B cell (primary cell): ENCODE measurements at regions of chr4 and their contacts with region 1.

Region 1: GRCh38 chr4:40924096-40924792 is 174.5 kb downstream of the NSUN7 start:
- DNase-seq: peak; percentile 66
- ATAC-seq: peak; percentile 78
- H3K4me3 ChIP-seq: no peak overlapping the region
- H3K4me3 Mint-ChIP-seq: no peak overlapping the region
- H3K27ac ChIP-seq: no peak overlapping the region
- H3K27ac Mint-ChIP-seq: no peak overlapping the region
- H3K4me1 ChIP-seq: peaks cover 0 to 3% of the 10 kb centered on the region in 2 donors
- H3K4me1 Mint-ChIP-seq: peaks cover 3% of the 10 kb centered on the region
- H3K27me3 ChIP-seq: no peaks in the 10 kb centered on the region
- H3K27me3 Mint-ChIP-seq: peaks cover 7% of the 10 kb centered on the region
- CTCF ChIP-seq: peak; percentile 85

Region 2: GRCh38 chr4:40736910-40737309 is 187.3 kb before region 1 on chr4:
- CTCF ChIA-PET with region 1: interaction called, 53 read pairs
- POLR2A ChIA-PET with region 1: no interaction called
- intact Hi-C with region 1: loop called (anchors 1 kb)
- DNase-seq: peak; percentile 56
- ATAC-seq: no peak
- H3K4me3 ChIP-seq: no peak overlapping the region
- H3K4me3 Mint-ChIP-seq: no peak overlapping the region
- H3K27ac ChIP-seq: no peak overlapping the region
- H3K27ac Mint-ChIP-seq: no peak overlapping the region
- H3K4me1 ChIP-seq: peaks cover 0 to 2% of the 10 kb centered on the region in 2 donors
- H3K4me1 Mint-ChIP-seq: peaks cover 5% of the 10 kb centered on the region
- H3K27me3 ChIP-seq: no peaks in the 10 kb centered on the region
- H3K27me3 Mint-ChIP-seq: peaks cover 3% of the 10 kb centered on the region
- CTCF ChIP-seq: peak; percentile 57

Region 3: GRCh38 chr4:40897557-40898203 is 26.6 kb before region 1 on chr4:
- CTCF ChIA-PET with region 1: interaction called, 15 read pairs
- POLR2A ChIA-PET with region 1: no interaction called
- intact Hi-C with region 1: no loop called
- DNase-seq: peak; percentile 75
- ATAC-seq: peak; percentile 73
- H3K4me3 ChIP-seq: peak overlapping the region in 2 of 5 experiments; percentile 1 to 19
- H3K4me3 Mint-ChIP-seq: peak overlapping the region; percentile 75
- H3K27ac ChIP-seq: no peak overlapping the region
- H3K27ac Mint-ChIP-seq: peak overlapping the region; percentile 70
- H3K4me1 ChIP-seq: peaks cover 4 to 5% of the 10 kb centered on the region in 2 donors
- H3K4me1 Mint-ChIP-seq: peaks cover 7% of the 10 kb centered on the region
- H3K27me3 ChIP-seq: no peaks in the 10 kb centered on the region
- H3K27me3 Mint-ChIP-seq: no peaks in the 10 kb centered on the region
- CTCF ChIP-seq: peak; percentile 96

Region 4: GRCh38 chr4:40912460-40913184 is 11.6 kb before region 1 on chr4:
- CTCF ChIA-PET with region 1: interaction called, 18 read pairs
- POLR2A ChIA-PET with region 1: no interaction called
- intact Hi-C with region 1: no loop called
- DNase-seq: no peak
- ATAC-seq: no peak
- H3K4me3 ChIP-seq: no peak overlapping the region
- H3K4me3 Mint-ChIP-seq: no peak overlapping the region
- H3K27ac ChIP-seq: no peak overlapping the region
- H3K27ac Mint-ChIP-seq: no peak overlapping the region
- H3K4me1 ChIP-seq: peaks cover 9 to 10% of the 10 kb centered on the region in 2 donors
- H3K4me1 Mint-ChIP-seq: peaks cover 14% of the 10 kb centered on the region
- H3K27me3 ChIP-seq: no peaks in the 10 kb centered on the region
- H3K27me3 Mint-ChIP-seq: no peaks in the 10 kb centered on the region
- CTCF ChIP-seq: no peak

Region 5: DNA sequence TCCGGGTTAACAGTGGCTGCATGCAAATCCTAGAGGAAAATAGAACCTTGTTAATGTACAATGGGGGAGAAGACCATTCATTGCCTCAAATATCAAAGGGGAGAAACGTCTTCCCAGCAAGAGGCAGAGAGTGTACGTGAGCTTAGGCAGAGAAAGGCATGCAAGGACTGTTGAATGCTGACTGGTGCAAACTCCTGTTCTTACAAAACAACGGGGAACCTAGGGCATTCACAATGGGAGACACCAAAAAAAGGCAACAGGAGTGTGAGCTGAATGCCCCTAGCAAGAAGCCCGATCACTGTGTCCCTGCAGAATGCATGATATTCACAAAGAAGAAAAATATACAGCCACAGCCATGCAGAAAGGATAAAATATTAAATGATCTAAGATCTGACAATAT is 10.4 kb after region 1 on chr4:
- CTCF ChIA-PET with region 1: interaction called, 24 read pairs
- POLR2A ChIA-PET with region 1: no interaction called
- intact Hi-C with region 1: no loop called
- DNase-seq: no peak
- ATAC-seq: no peak
- H3K4me3 ChIP-seq: no peak overlapping the region
- H3K4me3 Mint-ChIP-seq: no peak overlapping the region
- H3K27ac ChIP-seq: no peak overlapping the region
- H3K27ac Mint-ChIP-seq: no peak overlapping the region
- H3K4me1 ChIP-seq: no peaks in the 10 kb centered on the region
- H3K4me1 Mint-ChIP-seq: no peaks in the 10 kb centered on the region
- H3K27me3 ChIP-seq: peaks cover 0 to 12% (median 0%) of the 10 kb centered on the region in 4 experiments
- H3K27me3 Mint-ChIP-seq: peaks cover 8% of the 10 kb centered on the region
- CTCF ChIP-seq: no peak